Naive thymus-derived CD4-positive, alpha-beta T cell (primary cell): ENCODE measurements at regions of chr7 and their contacts with region 1.

Region 1: GRCh38 chr7:156949541-156950380 is at the start of gene NOM1:
- DNase-seq: peak; percentile 80 to 96 (median 90)
- ATAC-seq: peak; percentile 99
- H3K4me3 ChIP-seq: peak within 1 kb of the TSS; percentile 96
- H3K4me3 Mint-ChIP-seq: peak within 1 kb of the TSS; percentile 86 to 99 (median 97)
- H3K27ac ChIP-seq: peak within 1 kb of the TSS; percentile 82
- H3K27ac Mint-ChIP-seq: peak within 1 kb of the TSS; percentile 66 to 98 (median 90)
- H3K4me1 ChIP-seq: peaks cover 9 to 13% of the 10 kb centered on the region in 2 donors
- H3K4me1 Mint-ChIP-seq: peaks cover 8 to 44% (median 34%) of the 10 kb centered on the region in 7 donors
- H3K27me3 ChIP-seq: no peaks in the 10 kb centered on the region
- H3K27me3 Mint-ChIP-seq: peaks cover 1 to 23% (median 6%) of the 10 kb centered on the region in 5 donors
- total RNA-seq, gene NOM1: 28.1 to 40.7 (median 32.9) TPM

Region 2: GRCh38 chr7:156903232-156903909 is 46.4 kb before region 1 on chr7:
- CTCF ChIA-PET with region 1: no interaction called
- POLR2A ChIA-PET with region 1: no interaction called
- intact Hi-C with region 1: loop called in 1 of 2 experiments (anchors 5 kb)
- DNase-seq: peak in 6 of 9 donors; percentile 12 to 43 (median 28)
- ATAC-seq: peak; percentile 46
- H3K4me3 ChIP-seq: no peak overlapping the region
- H3K4me3 Mint-ChIP-seq: peak overlapping the region in 9 of 10 donors; percentile 1 to 59 (median 51)
- H3K27ac ChIP-seq: no peak overlapping the region
- H3K27ac Mint-ChIP-seq: peak overlapping the region; percentile 22 to 56 (median 44)
- H3K4me1 ChIP-seq: peaks cover 0 to 11% of the 10 kb centered on the region in 2 donors
- H3K4me1 Mint-ChIP-seq: peaks cover 7 to 13% (median 10%) of the 10 kb centered on the region in 7 donors
- H3K27me3 ChIP-seq: peaks cover 0 to 2% of the 10 kb centered on the region in 2 donors
- H3K27me3 Mint-ChIP-seq: peaks cover 0 to 5% (median 0%) of the 10 kb centered on the region in 5 donors

Region 3: GRCh38 chr7:156927571-156928405 is 22.0 kb before region 1 on chr7:
- CTCF ChIA-PET with region 1: interaction called, 3 read pairs
- POLR2A ChIA-PET with region 1: interaction called, 3 read pairs
- intact Hi-C with region 1: loop called in 1 of 2 experiments (anchors 2 kb)
- DNase-seq: no peak
- ATAC-seq: no peak
- H3K4me3 ChIP-seq: no peak overlapping the region
- H3K4me3 Mint-ChIP-seq: no peak overlapping the region
- H3K27ac ChIP-seq: no peak overlapping the region
- H3K27ac Mint-ChIP-seq: no peak overlapping the region
- H3K4me1 ChIP-seq: peaks cover 1 to 8% of the 10 kb centered on the region in 2 donors
- H3K4me1 Mint-ChIP-seq: peaks cover 11 to 58% (median 19%) of the 10 kb centered on the region in 7 donors
- H3K27me3 ChIP-seq: no peaks in the 10 kb centered on the region
- H3K27me3 Mint-ChIP-seq: peaks cover 0 to 64% (median 0%) of the 10 kb centered on the region in 5 donors

Region 4: GRCh38 chr7:157089100-157089610 is 139.4 kb after region 1 on chr7:
- CTCF ChIA-PET with region 1: no interaction called
- POLR2A ChIA-PET with region 1: no interaction called
- intact Hi-C with region 1: no loop called
- DNase-seq: no peak
- ATAC-seq: no peak
- H3K4me3 ChIP-seq: no peak overlapping the region
- H3K4me3 Mint-ChIP-seq: no peak overlapping the region
- H3K27ac ChIP-seq: no peak overlapping the region
- H3K27ac Mint-ChIP-seq: peak overlapping the region in 1 of 9 donors; percentile 11
- H3K4me1 ChIP-seq: no peaks in the 10 kb centered on the region
- H3K4me1 Mint-ChIP-seq: peaks cover 0 to 3% (median 0%) of the 10 kb centered on the region in 7 donors
- H3K27me3 ChIP-seq: no peaks in the 10 kb centered on the region
- H3K27me3 Mint-ChIP-seq: peaks cover 0 to 46% (median 18%) of the 10 kb centered on the region in 5 donors

Region 5: GRCh38 chr7:157138424-157139110 is 188.8 kb after region 1 on chr7 and contains the start of gene UBE3C:
- CTCF ChIA-PET with region 1: no interaction called
- POLR2A ChIA-PET with region 1: no interaction called
- intact Hi-C with region 1: loop called (anchors 2 kb)
- DNase-seq: peak; percentile 88 to 96 (median 93)
- ATAC-seq: peak; percentile 91
- H3K4me3 ChIP-seq: peak within 1 kb of the TSS; percentile 82
- H3K4me3 Mint-ChIP-seq: peak within 1 kb of the TSS; percentile 77 to 93 (median 84)
- H3K27ac ChIP-seq: peak within 1 kb of the TSS; percentile 92
- H3K27ac Mint-ChIP-seq: peak within 1 kb of the TSS; percentile 76 to 99 (median 93)
- H3K4me1 ChIP-seq: peaks cover 35 to 43% of the 10 kb centered on the region in 2 donors
- H3K4me1 Mint-ChIP-seq: peaks cover 26 to 45% (median 42%) of the 10 kb centered on the region in 7 donors
- H3K27me3 ChIP-seq: no peaks in the 10 kb centered on the region
- H3K27me3 Mint-ChIP-seq: peaks cover 0 to 2% (median 0%) of the 10 kb centered on the region in 5 donors
- total RNA-seq, gene UBE3C: 41.6 to 64.6 (median 54.9) TPM

Region 6: GRCh38 chr7:157273208-157274093 is 323.7 kb after region 1 on chr7:
- CTCF ChIA-PET with region 1: no interaction called
- POLR2A ChIA-PET with region 1: no interaction called
- intact Hi-C with region 1: loop called in 1 of 2 experiments (anchors 2 kb)
- DNase-seq: peak; percentile 17 to 66 (median 50)
- ATAC-seq: peak; percentile 84
- H3K4me3 ChIP-seq: no peak overlapping the region
- H3K4me3 Mint-ChIP-seq: peak overlapping the region in 1 of 10 donors; percentile 25
- H3K27ac ChIP-seq: no peak overlapping the region
- H3K27ac Mint-ChIP-seq: peak overlapping the region in 5 of 9 donors; percentile 16 to 81 (median 69)
- H3K4me1 ChIP-seq: peaks cover 6 to 14% of the 10 kb centered on the region in 2 donors
- H3K4me1 Mint-ChIP-seq: peaks cover 0 to 25% (median 13%) of the 10 kb centered on the region in 7 donors
- H3K27me3 ChIP-seq: no peaks in the 10 kb centered on the region
- H3K27me3 Mint-ChIP-seq: peaks cover 0 to 4% (median 0%) of the 10 kb centered on the region in 5 donors

Region 7: DNA sequence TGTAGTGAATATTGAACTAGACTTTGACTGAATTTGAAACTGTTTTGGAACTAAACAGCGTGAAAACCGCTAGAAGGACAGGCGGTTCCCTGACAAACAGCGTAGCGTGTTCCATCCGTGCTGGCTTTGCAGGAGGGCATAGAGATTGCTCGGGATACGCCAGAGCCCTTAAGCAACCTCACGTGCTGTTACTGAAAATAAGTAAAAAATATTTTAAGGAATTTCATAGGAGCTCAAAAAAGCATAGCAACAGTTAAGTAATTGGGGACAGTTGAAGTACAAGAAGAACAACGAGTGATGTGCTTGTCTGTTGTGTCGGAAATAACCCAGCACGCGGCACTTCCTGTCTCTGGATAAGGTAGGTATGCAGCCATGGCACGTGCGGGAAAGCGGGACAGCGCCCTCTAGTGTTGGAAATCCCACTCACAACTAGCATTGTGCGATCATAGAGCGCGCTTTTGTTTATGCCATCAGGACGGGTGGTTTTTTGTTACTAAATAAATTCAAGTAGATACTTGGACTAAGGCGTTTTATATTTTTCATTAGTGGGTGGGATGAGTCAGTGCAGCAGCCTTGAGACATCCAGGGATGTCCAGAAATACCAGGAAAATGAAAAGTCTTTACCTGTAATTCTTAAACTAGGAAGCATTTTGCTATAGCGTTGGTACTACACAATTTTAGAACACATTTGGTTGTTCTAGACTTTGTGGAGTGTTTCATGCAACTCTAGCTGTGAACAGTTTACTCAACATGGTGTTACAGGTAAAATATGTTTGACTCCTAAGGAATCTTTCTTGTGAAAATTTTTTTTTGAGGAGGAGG is 437.4 kb after region 1 on chr7:
- CTCF ChIA-PET with region 1: no interaction called
- POLR2A ChIA-PET with region 1: no interaction called
- intact Hi-C with region 1: loop called in 1 of 2 experiments (anchors 2 kb)
- DNase-seq: peak; percentile 67 to 90 (median 87)
- ATAC-seq: peak; percentile 96
- H3K4me3 ChIP-seq: no peak overlapping the region
- H3K4me3 Mint-ChIP-seq: peak overlapping the region in 7 of 10 donors; percentile 5 to 56 (median 21)
- H3K27ac ChIP-seq: peak overlapping the region; percentile 64
- H3K27ac Mint-ChIP-seq: peak overlapping the region; percentile 48 to 87 (median 72)
- H3K4me1 ChIP-seq: peaks cover 17 to 20% of the 10 kb centered on the region in 2 donors
- H3K4me1 Mint-ChIP-seq: peaks cover 26 to 52% (median 39%) of the 10 kb centered on the region in 7 donors
- H3K27me3 ChIP-seq: no peaks in the 10 kb centered on the region
- H3K27me3 Mint-ChIP-seq: no peaks in the 10 kb centered on the region